ENCODE measurements at regions of chr11 and their contacts with region 1.

Region 1: GRCh38 chr11:123478352-123478987 is 48.4 kb downstream of the GRAMD1B start:
- DNase-seq: peak; percentile 47
- ATAC-seq: peak; percentile 45
- H3K4me3 Mint-ChIP-seq: peak overlapping the region; percentile 57
- H3K27ac Mint-ChIP-seq: peak overlapping the region; percentile 78
- H3K4me1 Mint-ChIP-seq: peaks cover 71% of the 10 kb centered on the region
- H3K27me3 Mint-ChIP-seq: no peaks in the 10 kb centered on the region

Region 2: GRCh38 chr11:123429913-123430720 is 48.4 kb before region 1 on chr11 and contains the start of gene GRAMD1B:
- CTCF ChIA-PET with region 1: interaction called, 19 read pairs
- DNase-seq: peak; percentile 90
- ATAC-seq: peak; percentile 75
- H3K4me3 Mint-ChIP-seq: peak within 1 kb of the TSS; percentile 89
- H3K27ac Mint-ChIP-seq: peak within 1 kb of the TSS; percentile 93
- H3K4me1 Mint-ChIP-seq: peaks cover 50% of the 10 kb centered on the region
- H3K27me3 Mint-ChIP-seq: no peaks in the 10 kb centered on the region
- total RNA-seq, gene GRAMD1B: 75.6 to 89.9 TPM

Region 3: DNA sequence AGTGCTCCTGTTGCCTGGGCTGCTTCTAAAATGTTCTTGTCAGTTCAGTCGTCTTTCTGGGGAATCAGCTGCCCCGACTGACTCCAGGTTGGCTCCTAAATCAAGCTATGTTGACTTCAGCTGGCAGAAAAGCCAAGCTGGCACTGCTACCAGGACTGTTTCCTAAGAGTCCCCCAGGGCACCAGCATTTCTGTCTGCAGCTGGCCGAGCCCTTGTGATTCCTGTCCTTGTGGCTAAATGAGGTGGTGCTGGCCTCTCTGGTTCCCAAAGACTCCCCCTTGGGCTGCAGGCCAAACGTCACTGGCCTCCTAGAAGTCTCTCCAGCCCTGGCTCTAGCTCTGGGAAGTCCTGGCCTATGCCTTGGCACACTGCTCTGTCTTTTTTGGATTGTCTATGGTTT is 17.3 kb before region 1 on chr11:
- CTCF ChIA-PET with region 1: interaction called, 48 read pairs
- DNase-seq: no peak
- ATAC-seq: no peak
- H3K4me3 Mint-ChIP-seq: no peak overlapping the region
- H3K27ac Mint-ChIP-seq: no peak overlapping the region
- H3K4me1 Mint-ChIP-seq: peaks cover 61% of the 10 kb centered on the region
- H3K27me3 Mint-ChIP-seq: no peaks in the 10 kb centered on the region

Region 4: DNA sequence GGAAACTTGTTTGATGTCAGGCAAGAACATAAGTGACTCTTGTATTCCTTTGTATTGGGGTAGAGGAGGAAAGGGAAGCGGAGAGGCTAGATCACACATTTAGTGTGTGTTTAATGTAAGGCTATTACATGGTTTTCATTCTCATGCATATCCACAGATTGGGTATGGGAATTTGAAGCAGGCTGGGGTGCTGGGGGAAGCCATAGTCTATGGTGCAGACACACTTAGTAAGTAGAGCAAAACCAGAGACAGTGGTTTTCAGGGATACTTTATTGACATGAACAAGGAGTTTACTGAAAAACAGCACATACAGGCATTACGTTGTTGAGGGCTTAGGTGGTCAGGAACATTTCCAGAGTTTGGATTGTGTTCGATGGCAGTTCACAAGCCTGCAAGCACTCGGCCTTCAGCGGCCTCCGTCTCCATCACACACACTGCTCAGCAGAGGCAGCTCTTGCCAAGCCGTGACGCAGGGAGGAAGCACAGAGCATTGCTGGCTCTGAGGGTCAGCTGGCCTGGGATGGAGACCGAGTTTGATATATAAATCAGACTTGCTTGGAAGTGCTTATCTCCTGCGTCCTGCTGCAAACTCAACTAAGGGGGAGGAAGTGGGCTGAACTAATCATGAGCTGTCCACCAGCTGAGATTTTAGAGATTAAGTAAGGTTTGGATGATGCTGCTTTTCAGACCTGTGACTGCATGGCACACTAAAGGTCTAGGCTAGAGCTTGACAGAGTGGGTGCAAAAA is 150.6 kb after region 1 on chr11:
- CTCF ChIA-PET with region 1: no interaction called
- DNase-seq: no peak
- ATAC-seq: no peak
- H3K4me3 Mint-ChIP-seq: no peak overlapping the region
- H3K27ac Mint-ChIP-seq: no peak overlapping the region
- H3K4me1 Mint-ChIP-seq: no peaks in the 10 kb centered on the region
- H3K27me3 Mint-ChIP-seq: peaks cover 11% of the 10 kb centered on the region

Measured in activated CD8-positive, alpha-beta memory T cell treated with anti-CD3 and anti-CD28 coated beads, Interleukin-2, amount 10 ng/mL, durations not matched to agents 7 days and 5 days (primary cell).